Kidney (tissue), 22 donors: ENCODE measurements at regions of chr9 and their contacts with region 1.

Region 1: DNA sequence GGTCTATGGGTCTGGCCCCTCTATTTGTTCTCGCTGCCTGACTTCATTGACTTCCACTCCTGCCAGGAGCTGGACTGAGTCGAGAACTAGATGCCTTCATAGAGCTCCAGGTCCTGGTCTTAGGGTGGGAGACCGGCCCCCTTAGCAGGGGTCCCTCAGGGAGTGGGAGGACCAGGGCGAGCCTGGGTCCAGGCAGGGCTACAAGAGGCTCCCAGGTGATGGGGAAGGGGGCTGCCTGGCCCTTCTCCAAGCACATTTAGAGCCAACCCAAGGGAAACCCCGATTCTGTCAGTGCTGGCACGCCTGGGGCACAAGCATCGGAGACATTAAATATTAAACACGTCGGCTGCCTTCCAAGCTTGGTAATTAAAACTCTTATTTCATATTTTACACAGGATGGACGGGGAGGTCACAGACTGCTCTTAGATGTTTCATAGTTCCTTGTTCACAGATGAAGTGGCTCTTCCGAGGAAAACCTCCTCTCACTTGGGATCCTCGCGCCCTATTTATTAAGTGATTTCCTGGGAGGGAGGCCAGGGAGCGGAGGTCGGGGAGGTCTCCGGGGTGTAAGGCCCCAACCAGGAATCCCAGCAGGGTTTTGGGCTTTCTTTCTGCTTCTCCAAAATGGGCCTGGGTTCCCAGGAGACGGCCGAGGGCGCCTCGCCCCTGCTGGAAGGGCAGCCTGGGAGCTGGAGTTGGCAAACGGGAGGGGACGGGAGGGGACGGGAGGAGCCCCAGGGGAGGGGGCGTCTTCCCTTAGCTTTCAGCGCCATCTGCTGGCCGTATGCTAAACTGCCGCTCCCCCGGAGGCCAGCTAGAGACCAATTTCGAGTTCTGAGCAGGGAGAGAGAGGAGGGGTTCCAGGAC is 23.4 kb upstream of the ZBTB43 start:
- DNase-seq: peak; percentile 91 to 93 (median 92)
- H3K4me3 ChIP-seq: peak overlapping the region in 1 of 3 donors; percentile 35
- H3K27ac ChIP-seq: no peak overlapping the region
- H3K4me1 ChIP-seq: peaks cover 0 to 2% (median 0%) of the 10 kb centered on the region in 3 donors
- H3K27me3 ChIP-seq: no peaks in the 10 kb centered on the region
- CTCF ChIP-seq: peak; percentile 91

Region 2: GRCh38 chr9:126500684-126501382 is 280.6 kb before region 1 on chr9:
- intact Hi-C with region 1: loop called (anchors 10 kb)
- DNase-seq: peak; percentile 89 to 94 (median 92)
- H3K4me3 ChIP-seq: no peak overlapping the region
- H3K27ac ChIP-seq: no peak overlapping the region
- H3K4me1 ChIP-seq: no peaks in the 10 kb centered on the region
- H3K27me3 ChIP-seq: peaks cover 4% of the 10 kb centered on the region
- CTCF ChIP-seq: peak; percentile 98

Region 3: DNA sequence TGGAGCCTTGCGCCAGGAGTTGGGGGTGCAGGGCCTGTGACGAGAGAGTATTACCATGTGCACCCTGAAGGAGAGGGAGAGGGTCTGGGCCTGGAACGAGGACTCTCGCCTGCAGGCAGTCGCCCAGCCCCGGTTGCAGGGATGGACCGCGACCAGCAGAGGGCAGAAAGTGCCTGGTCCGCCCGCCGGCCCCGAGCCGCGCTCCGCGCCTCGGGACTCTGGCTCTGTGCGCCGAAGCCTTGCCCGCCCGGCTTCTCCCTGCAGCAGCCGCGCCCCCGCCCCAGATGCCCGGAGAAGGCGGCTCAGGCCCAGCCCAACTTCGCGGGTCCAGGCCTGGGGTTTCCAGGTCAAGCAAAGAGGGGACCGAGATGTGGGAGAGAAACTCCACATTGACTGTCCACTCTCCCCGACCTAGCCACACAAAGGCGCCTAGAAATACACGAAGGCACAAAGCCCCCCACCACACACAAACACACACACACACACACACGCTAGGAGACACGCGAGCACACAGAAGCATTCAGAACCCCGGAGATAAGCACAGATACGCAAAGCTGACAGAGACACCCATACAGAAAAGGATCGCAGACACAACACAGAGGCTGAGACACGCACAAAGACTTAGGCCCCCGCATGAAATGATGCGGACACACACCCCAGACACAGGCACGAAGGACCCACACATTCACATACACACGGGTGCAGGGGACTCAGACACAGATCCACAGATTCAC is 169.7 kb before region 1 on chr9:
- intact Hi-C with region 1: loop called (anchors 10 kb)
- DNase-seq: peak; percentile 90 to 92 (median 90)
- H3K4me3 ChIP-seq: peak overlapping the region; percentile 12 to 17 (median 17)
- H3K27ac ChIP-seq: no peak overlapping the region
- H3K4me1 ChIP-seq: peaks cover 0 to 19% (median 4%) of the 10 kb centered on the region in 3 donors
- H3K27me3 ChIP-seq: peaks cover 19% of the 10 kb centered on the region
- CTCF ChIP-seq: peak; percentile 75

Region 4: GRCh38 chr9:126704873-126705766 is 76.3 kb before region 1 on chr9:
- intact Hi-C with region 1: loop called (anchors 5 kb)
- DNase-seq: peak; percentile 88 to 91 (median 90)
- H3K4me3 ChIP-seq: peak overlapping the region in 1 of 3 donors; percentile 43
- H3K27ac ChIP-seq: no peak overlapping the region
- H3K4me1 ChIP-seq: peaks cover 0 to 4% (median 3%) of the 10 kb centered on the region in 3 donors
- H3K27me3 ChIP-seq: no peaks in the 10 kb centered on the region
- CTCF ChIP-seq: peak; percentile 97

Region 5: GRCh38 chr9:127014216-127014615 is 232.8 kb after region 1 on chr9:
- intact Hi-C with region 1: no loop called
- DNase-seq: peak in 1 of 5 donors; percentile 34
- H3K4me3 ChIP-seq: no peak overlapping the region
- H3K27ac ChIP-seq: no peak overlapping the region
- H3K4me1 ChIP-seq: no peaks in the 10 kb centered on the region
- H3K27me3 ChIP-seq: no peaks in the 10 kb centered on the region
- CTCF ChIP-seq: no peak